ENCODE measurements at regions of chr17 and their contacts with region 1.

Region 1: DNA sequence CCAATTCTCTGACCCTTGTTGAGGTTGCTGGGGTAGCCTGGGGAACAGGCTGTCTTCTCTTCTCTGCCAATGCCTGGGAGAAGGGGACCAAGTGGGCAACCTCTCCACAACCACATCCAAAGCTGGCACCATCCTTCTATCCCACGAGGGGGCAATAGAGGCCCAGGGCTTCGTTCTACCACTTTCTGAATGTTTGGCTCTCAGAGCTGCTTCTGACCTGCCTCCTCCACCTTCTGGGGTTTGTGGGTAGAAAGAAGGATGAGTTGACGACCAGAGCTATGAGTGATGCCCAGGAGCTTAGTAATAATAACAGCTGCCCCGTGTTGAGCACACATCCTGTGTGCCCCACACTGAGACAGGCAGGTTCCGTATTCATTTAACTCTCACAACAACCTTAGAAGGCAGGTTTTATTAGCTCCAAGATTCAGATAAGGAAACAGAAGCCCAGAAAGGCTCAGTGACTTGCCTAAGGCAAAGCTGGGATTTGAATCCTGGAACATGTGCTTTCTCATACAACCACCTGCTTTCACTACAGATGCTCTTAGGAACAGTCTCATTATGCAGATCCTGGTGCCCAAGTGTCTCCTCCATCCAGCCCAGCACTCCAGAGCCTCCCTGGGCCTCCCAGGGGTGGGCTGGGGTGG is 11.1 kb downstream of the TSPOAP1 start:
- DNase-seq: peak; percentile 77
- H3K4me3 Mint-ChIP-seq: peak overlapping the region; percentile 3
- H3K27ac Mint-ChIP-seq: peak overlapping the region; percentile 86
- H3K4me1 Mint-ChIP-seq: peaks cover 17% of the 10 kb centered on the region
- H3K27me3 Mint-ChIP-seq: no peaks in the 10 kb centered on the region

Region 2: GRCh38 chr17:58189436-58190146 is 128.0 kb before region 1 on chr17:
- CTCF ChIA-PET with region 1: no interaction called
- POLR2A ChIA-PET with region 1: no interaction called
- DNase-seq: no peak
- H3K4me3 Mint-ChIP-seq: no peak overlapping the region
- H3K27ac Mint-ChIP-seq: no peak overlapping the region
- H3K4me1 Mint-ChIP-seq: peaks cover 4% of the 10 kb centered on the region
- H3K27me3 Mint-ChIP-seq: peaks cover 4% of the 10 kb centered on the region

Region 3: GRCh38 chr17:58254803-58255388 is 62.6 kb before region 1 on chr17:
- CTCF ChIA-PET with region 1: no interaction called
- POLR2A ChIA-PET with region 1: no interaction called
- DNase-seq: no peak
- H3K4me3 Mint-ChIP-seq: no peak overlapping the region
- H3K27ac Mint-ChIP-seq: no peak overlapping the region
- H3K4me1 Mint-ChIP-seq: peaks cover 3% of the 10 kb centered on the region
- H3K27me3 Mint-ChIP-seq: peaks cover 53% of the 10 kb centered on the region

Region 4: GRCh38 chr17:58270476-58271215 is 46.9 kb before region 1 on chr17:
- CTCF ChIA-PET with region 1: no interaction called
- POLR2A ChIA-PET with region 1: no interaction called
- DNase-seq: no peak
- H3K4me3 Mint-ChIP-seq: no peak overlapping the region
- H3K27ac Mint-ChIP-seq: no peak overlapping the region
- H3K4me1 Mint-ChIP-seq: no peaks in the 10 kb centered on the region
- H3K27me3 Mint-ChIP-seq: peaks cover 5% of the 10 kb centered on the region

Region 5: GRCh38 chr17:58303971-58304725 is 13.4 kb before region 1 on chr17:
- CTCF ChIA-PET with region 1: interaction called, 36 read pairs
- POLR2A ChIA-PET with region 1: interaction called, 3 read pairs
- DNase-seq: peak; percentile 65
- H3K4me3 Mint-ChIP-seq: no peak overlapping the region
- H3K27ac Mint-ChIP-seq: no peak overlapping the region
- H3K4me1 Mint-ChIP-seq: no peaks in the 10 kb centered on the region
- H3K27me3 Mint-ChIP-seq: peaks cover 6% of the 10 kb centered on the region

Region 6: GRCh38 chr17:58329035-58329809 is 11.7 kb after region 1 on chr17:
- CTCF ChIA-PET with region 1: interaction called, 40 read pairs
- POLR2A ChIA-PET with region 1: interaction called, 25 read pairs
- DNase-seq: peak; percentile 86
- H3K4me3 Mint-ChIP-seq: peak overlapping the region; percentile 93
- H3K27ac Mint-ChIP-seq: peak overlapping the region; percentile 99
- H3K4me1 Mint-ChIP-seq: peaks cover 36% of the 10 kb centered on the region
- H3K27me3 Mint-ChIP-seq: peaks cover 4% of the 10 kb centered on the region

Region 7: GRCh38 chr17:58344047-58344790 is 26.7 kb after region 1 on chr17:
- CTCF ChIA-PET with region 1: interaction called, 25 read pairs
- POLR2A ChIA-PET with region 1: interaction called, 15 read pairs
- DNase-seq: peak; percentile 90
- H3K4me3 Mint-ChIP-seq: peak overlapping the region; percentile 93
- H3K27ac Mint-ChIP-seq: peak overlapping the region; percentile 84
- H3K4me1 Mint-ChIP-seq: peaks cover 79% of the 10 kb centered on the region
- H3K27me3 Mint-ChIP-seq: no peaks in the 10 kb centered on the region

Region 8: DNA sequence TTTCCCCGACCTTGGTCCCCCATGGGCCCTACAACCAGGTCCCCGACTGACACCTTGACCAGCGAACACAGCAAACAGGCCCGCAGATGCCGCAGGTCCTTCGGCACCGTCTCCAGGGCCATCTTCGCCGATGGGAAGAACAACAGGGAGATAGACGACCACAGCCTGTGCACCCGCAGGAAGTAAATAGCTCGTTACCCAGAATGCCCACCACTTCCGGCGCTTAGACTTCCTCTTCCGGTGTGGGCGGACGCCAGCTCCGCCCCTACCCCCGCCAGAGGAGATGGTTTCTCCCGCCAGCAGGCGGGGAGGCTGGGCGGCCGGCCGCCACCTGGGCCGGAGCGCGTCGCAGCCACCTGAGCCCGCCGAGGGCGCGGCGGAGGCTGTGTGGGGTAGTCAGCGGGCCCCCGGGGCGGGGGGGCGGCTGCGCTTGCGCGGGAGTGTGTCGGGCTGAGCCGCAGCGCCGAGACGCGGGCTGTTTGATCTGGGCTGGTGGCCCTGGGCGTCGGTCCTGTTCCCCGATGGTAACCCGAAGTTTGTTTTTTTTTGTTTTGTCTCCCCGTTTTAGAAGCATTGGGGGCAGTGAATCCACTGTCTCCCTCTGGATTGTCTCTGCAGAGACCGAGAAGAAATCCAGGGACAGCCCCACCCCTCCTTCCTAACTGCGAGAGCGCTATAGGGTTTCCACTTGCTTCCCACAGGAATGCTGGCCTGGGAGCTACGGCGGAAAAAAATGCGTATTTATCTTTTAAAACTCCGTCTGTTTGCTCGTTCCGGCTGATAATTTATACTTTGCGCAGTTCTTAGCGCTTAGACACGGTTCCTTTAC is 34.7 kb after region 1 on chr17 and contains the start of gene SUPT4H1:
- CTCF ChIA-PET with region 1: interaction called, 9 read pairs
- POLR2A ChIA-PET with region 1: interaction called, 16 read pairs
- DNase-seq: peak; percentile 91
- H3K4me3 Mint-ChIP-seq: peak within 1 kb of the TSS; percentile 95
- H3K27ac Mint-ChIP-seq: peak within 1 kb of the TSS; percentile 92
- H3K4me1 Mint-ChIP-seq: peaks cover 58% of the 10 kb centered on the region
- H3K27me3 Mint-ChIP-seq: no peaks in the 10 kb centered on the region
- total RNA-seq, gene SUPT4H1: 66.1 to 69.0 TPM

Region 9: GRCh38 chr17:58417300-58418092 is 100.0 kb after region 1 on chr17 and contains the start of gene RNF43:
- CTCF ChIA-PET with region 1: interaction called, 36 read pairs
- POLR2A ChIA-PET with region 1: interaction called, 5 read pairs
- DNase-seq: peak; percentile 91
- H3K4me3 Mint-ChIP-seq: no peak within 1 kb of the TSS
- H3K27ac Mint-ChIP-seq: peak within 1 kb of the TSS; percentile 50
- H3K4me1 Mint-ChIP-seq: peaks cover 26% of the 10 kb centered on the region
- H3K27me3 Mint-ChIP-seq: no peaks in the 10 kb centered on the region
- total RNA-seq, gene RNF43: 0.07 to 0.12 TPM

Region 10: DNA sequence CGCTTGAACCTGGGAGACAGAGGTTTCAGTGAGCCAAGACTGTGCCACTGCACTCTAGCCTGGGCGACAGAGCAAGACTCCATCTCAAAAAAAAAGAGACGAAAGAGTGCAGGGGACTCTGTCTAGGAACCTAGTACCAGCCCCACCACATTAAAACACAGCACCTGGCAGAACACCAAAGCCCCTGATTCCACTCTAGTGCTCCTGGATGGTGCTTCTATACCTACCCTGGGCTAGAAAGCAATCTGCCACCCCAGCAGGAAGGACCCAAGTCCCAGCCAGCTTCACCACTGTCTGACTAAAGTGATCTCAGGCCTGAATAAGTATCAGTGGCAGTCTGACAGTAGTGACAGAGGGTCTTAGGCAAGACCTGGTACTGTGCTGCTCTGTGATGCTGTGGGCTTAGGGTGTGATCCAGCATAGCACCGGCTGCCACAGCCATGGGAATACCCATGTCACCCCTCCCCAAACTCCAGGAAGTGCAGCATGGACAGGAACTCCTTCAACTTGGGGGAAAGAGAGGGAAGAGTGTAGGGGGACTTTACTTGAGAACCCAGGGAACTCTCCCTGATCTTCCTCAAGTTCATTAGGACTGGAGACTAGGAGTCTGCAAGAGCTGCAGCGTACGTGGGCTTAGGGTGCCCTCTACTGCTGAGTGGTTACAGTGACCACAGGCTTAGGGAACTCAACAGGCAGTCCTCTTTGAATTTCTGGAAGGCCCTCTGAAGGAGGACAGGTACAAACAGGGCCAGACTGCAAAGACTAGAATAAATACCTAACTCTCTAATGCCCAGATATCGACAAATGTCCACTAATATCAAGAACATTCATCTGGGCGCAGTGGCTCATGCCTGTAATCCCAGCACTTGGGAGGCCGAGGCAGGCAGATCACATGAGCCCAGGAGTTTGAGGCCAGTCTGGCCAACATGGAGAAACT is 129.8 kb after region 1 on chr17:
- CTCF ChIA-PET with region 1: interaction called, 13 read pairs
- POLR2A ChIA-PET with region 1: interaction called, 7 read pairs
- DNase-seq: peak; percentile 82
- H3K4me3 Mint-ChIP-seq: no peak overlapping the region
- H3K27ac Mint-ChIP-seq: no peak overlapping the region
- H3K4me1 Mint-ChIP-seq: peaks cover 6% of the 10 kb centered on the region
- H3K27me3 Mint-ChIP-seq: no peaks in the 10 kb centered on the region

Measured in activated CD4-positive, alpha-beta T cell treated with anti-CD3 and anti-CD28 coated beads, Interleukin-2, amount 10 ng/mL, durations not matched to agents 7 days and 5 days (primary cell).